CD4-positive, alpha-beta memory T cell (primary cell): ENCODE measurements at regions of chr4 and their contacts with region 1.

Region 1: DNA sequence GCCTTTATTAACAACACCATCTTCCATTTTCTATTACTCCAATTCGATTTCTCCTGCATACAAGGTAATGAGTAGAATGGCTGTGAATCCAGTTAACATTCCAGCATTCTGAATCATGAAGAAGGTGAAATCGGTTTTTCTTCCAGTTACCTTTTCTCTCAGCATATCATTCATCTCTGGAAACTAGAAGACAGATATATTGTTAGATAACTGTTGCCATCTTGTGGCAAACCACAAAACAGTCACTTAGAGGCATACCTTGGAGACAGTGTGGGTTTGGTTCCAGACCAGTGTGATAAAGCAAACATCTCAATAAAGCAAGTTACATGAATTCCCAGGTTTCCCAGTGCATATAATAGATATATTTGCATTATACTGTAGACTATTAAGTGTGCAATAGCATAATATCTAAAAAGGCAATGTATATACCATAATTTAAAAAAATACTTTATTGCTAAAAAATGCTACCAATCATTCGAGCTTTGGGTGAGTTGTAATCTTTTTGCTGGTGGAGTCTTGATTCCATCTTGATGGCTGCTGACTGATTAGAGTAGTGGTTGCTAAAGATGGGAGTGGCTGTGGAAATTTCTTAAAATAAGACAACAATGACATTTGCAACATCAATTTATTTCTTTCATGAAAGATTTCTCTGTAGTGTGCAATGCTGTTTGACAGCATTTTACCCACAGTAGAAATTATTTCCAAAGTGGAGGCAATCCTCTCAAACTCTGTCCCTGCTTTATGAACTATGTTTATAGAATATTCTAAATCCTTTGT is 82.1 kb downstream of the SLC39A8 start:
- DNase-seq: peak in 4 of 5 donors; percentile 20 to 26 (median 23)
- H3K4me3 ChIP-seq: no peak overlapping the region
- H3K4me3 Mint-ChIP-seq: no peak overlapping the region
- H3K27ac ChIP-seq: no peak overlapping the region
- H3K27ac Mint-ChIP-seq: peak overlapping the region in 3 of 7 donors; percentile 7 to 77 (median 25)
- H3K4me1 ChIP-seq: no peaks in the 10 kb centered on the region
- H3K4me1 Mint-ChIP-seq: peaks cover 3 to 8% (median 4%) of the 10 kb centered on the region in 4 donors
- H3K27me3 ChIP-seq: no peaks in the 10 kb centered on the region
- H3K27me3 Mint-ChIP-seq: no peaks in the 10 kb centered on the region

Region 2: GRCh38 chr4:100421361-100421978 is 1841.7 kb before region 1 on chr4:
- CTCF ChIA-PET with region 1: no interaction called
- POLR2A ChIA-PET with region 1: no interaction called
- intact Hi-C with region 1: loop called (anchors 5 kb)
- DNase-seq: peak in 1 of 5 donors; percentile 1
- H3K4me3 ChIP-seq: no peak overlapping the region
- H3K4me3 Mint-ChIP-seq: no peak overlapping the region
- H3K27ac ChIP-seq: no peak overlapping the region
- H3K27ac Mint-ChIP-seq: no peak overlapping the region
- H3K4me1 ChIP-seq: no peaks in the 10 kb centered on the region
- H3K4me1 Mint-ChIP-seq: no peaks in the 10 kb centered on the region
- H3K27me3 ChIP-seq: no peaks in the 10 kb centered on the region
- H3K27me3 Mint-ChIP-seq: peaks cover 0 to 4% of the 10 kb centered on the region in 2 donors

Region 3: GRCh38 chr4:101169044-101170014 is 1093.9 kb before region 1 on chr4:
- CTCF ChIA-PET with region 1: no interaction called
- POLR2A ChIA-PET with region 1: no interaction called
- intact Hi-C with region 1: loop called (anchors 2 kb)
- DNase-seq: peak; percentile 45 to 64 (median 54)
- H3K4me3 ChIP-seq: no peak overlapping the region
- H3K4me3 Mint-ChIP-seq: no peak overlapping the region
- H3K27ac ChIP-seq: no peak overlapping the region
- H3K27ac Mint-ChIP-seq: no peak overlapping the region
- H3K4me1 ChIP-seq: peaks cover 8% of the 10 kb centered on the region
- H3K4me1 Mint-ChIP-seq: peaks cover 4 to 13% (median 6%) of the 10 kb centered on the region in 4 donors
- H3K27me3 ChIP-seq: no peaks in the 10 kb centered on the region
- H3K27me3 Mint-ChIP-seq: no peaks in the 10 kb centered on the region